ENCODE measurements at regions of chr3 and their contacts with region 1.

Region 1: GRCh38 chr3:196942226-196942914 is at the start of gene NCBP2:
- DNase-seq: peak; percentile 92 to 97 (median 96)
- H3K4me3 ChIP-seq: peak within 1 kb of the TSS; percentile 69 to 100 (median 98)
- H3K27ac ChIP-seq: peak within 1 kb of the TSS; percentile 4 to 98 (median 89)
- H3K27me3 ChIP-seq: no peaks in the 10 kb centered on the region
- CTCF ChIP-seq: peak; percentile 16 to 84 (median 66)
- total RNA-seq, gene NCBP2: 29.7 to 67.3 (median 53.4) TPM

Region 2: DNA sequence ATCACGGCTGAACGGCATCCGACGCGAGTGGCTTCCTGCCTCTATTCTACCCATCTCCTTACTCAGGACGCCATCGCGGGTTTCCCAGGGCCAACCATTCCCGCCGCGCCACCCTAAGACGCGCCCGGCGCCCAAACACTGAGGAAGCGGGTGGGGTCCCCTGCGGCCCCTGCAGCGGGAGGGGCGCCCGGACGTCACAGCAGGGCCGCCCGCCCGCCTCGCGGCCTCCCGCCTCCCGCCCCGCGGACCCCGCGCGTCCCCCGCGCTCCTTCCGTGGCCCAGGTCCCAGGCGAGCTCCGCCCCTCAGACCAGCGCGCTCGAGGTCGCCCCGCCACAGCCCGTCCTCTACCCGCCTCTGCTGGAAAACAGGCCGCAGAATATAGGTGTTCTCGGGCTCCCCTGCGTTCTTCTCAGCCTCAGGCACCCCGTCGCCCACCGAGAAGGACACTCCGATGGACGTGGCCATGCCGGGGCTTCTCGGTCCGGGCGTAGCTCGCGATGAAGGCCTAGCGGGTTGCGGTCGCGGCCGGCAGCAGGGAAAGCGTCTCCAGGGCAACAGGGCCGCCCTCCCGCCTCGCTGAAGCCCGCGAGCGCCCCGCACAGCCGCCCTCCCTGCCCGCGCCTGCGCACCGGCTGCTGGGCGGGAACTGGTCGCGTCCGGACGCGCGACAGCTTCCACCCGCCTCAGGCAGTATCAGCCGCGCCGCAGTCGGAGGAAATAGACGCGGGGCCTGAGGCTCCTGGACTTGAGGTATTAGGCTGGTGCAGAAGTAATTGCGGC is 624.5 kb before region 1 on chr3 and contains the start of gene DYNLT2B:
- intact Hi-C with region 1: loop called in 1 of 2 experiments (anchors 10 kb)
- DNase-seq: peak; percentile 74 to 93 (median 85)
- H3K4me3 ChIP-seq: peak within 1 kb of the TSS; percentile 65 to 94 (median 86)
- H3K27ac ChIP-seq: peak within 1 kb of the TSS; percentile 20 to 96 (median 88)
- H3K27me3 ChIP-seq: no peaks in the 10 kb centered on the region
- CTCF ChIP-seq: peak in 35 of 56 donors; percentile 9 to 52 (median 24)
- total RNA-seq, gene DYNLT2B: 11.4 to 43.8 (median 25.6) TPM

Region 3: DNA sequence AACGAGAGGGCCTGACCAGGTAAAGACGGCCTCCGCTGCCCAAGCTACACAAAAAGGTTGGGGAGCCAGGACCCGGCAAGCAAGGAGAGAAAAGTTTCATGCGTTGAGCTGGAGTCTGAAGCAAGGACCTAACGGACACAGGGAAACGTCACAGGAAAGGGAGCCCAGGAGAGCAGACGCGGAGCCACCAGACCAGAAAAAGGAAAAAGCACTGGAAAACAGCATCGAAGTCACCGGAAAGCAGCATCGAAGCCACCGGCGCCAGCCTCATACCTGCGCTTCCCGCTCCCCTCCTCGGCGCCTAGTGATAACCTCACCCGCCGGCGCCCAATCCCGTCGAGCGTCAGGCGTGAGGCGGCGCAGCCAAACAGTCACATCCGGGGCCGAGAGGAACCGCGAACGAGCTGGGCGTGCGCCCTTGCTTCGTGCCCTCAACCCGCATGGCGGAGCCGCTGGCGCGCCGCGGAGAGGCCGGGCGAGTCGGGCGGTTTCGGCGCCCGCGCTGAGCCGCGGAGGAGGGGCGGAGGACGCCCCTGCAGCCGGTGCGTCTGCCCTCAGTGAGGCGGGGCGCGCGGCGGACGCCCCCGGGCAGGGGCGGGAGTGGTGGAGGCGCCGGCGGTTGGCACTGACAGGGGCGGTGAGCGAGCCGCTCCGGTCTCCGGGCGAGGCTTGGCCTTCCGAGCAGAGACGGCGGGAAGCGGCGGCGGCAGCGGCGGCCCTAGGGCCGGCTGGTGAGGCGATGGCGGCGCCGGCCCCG is 373.9 kb before region 1 on chr3 and contains the starts of genes FBXO45 and WDR53:
- intact Hi-C with region 1: loop called (anchors 2 to 5 kb)
- DNase-seq: peak; percentile 85 to 96 (median 93)
- H3K4me3 ChIP-seq: peak within 1 kb of the TSS; percentile 63 to 100 (median 94)
- H3K27ac ChIP-seq: peak within 1 kb of the TSS in 56 of 59 donors; percentile 10 to 91 (median 77)
- H3K27me3 ChIP-seq: no peaks in the 10 kb centered on the region
- CTCF ChIP-seq: peak in 43 of 56 donors; percentile 7 to 65 (median 38)
- total RNA-seq, gene FBXO45: 12.3 to 28.8 (median 20.8) TPM
- total RNA-seq, gene WDR53: 6.0 to 19.1 (median 12.3) TPM

Region 4: GRCh38 chr3:196711838-196712513 is 230.4 kb before region 1 on chr3 and contains the starts of genes CEP19 and PIGX:
- intact Hi-C with region 1: loop called (anchors 5 to 10 kb)
- DNase-seq: peak; percentile 78 to 95 (median 86)
- H3K4me3 ChIP-seq: peak within 1 kb of the TSS; percentile 61 to 98 (median 90)
- H3K27ac ChIP-seq: peak within 1 kb of the TSS; percentile 39 to 97 (median 90)
- H3K27me3 ChIP-seq: no peaks in the 10 kb centered on the region
- CTCF ChIP-seq: peak in 40 of 56 donors; percentile 8 to 65 (median 32)
- total RNA-seq, gene CEP19: 2.8 to 14.6 (median 8.6) TPM
- total RNA-seq, gene PIGX: 23.5 to 51.0 (median 37.0) TPM

Region 5: GRCh38 chr3:196739671-196740480 is 202.5 kb before region 1 on chr3 and contains the start of gene PAK2:
- intact Hi-C with region 1: loop called in 1 of 2 experiments (anchors 1 kb)
- DNase-seq: peak; percentile 91 to 95 (median 94)
- H3K4me3 ChIP-seq: peak within 1 kb of the TSS; percentile 47 to 99 (median 92)
- H3K27ac ChIP-seq: peak within 1 kb of the TSS; percentile 63 to 98 (median 96)
- H3K27me3 ChIP-seq: no peaks in the 10 kb centered on the region
- CTCF ChIP-seq: peak in 55 of 56 donors; percentile 22 to 79 (median 59)
- total RNA-seq, gene PAK2: 28.1 to 67.1 (median 44.9) TPM

Region 6: GRCh38 chr3:196867507-196868296 is 74.7 kb before region 1 on chr3 and contains the start of gene SENP5:
- intact Hi-C with region 1: loop called (anchors 1 to 2 kb)
- DNase-seq: peak; percentile 81 to 96 (median 90)
- H3K4me3 ChIP-seq: peak within 1 kb of the TSS; percentile 63 to 100 (median 97)
- H3K27ac ChIP-seq: peak within 1 kb of the TSS in 58 of 59 donors; percentile 48 to 97 (median 91)
- H3K27me3 ChIP-seq: no peaks in the 10 kb centered on the region
- CTCF ChIP-seq: peak in 29 of 56 donors; percentile 3 to 59 (median 27)
- total RNA-seq, gene SENP5: 43.6 to 79.0 (median 59.0) TPM

Region 7: DNA sequence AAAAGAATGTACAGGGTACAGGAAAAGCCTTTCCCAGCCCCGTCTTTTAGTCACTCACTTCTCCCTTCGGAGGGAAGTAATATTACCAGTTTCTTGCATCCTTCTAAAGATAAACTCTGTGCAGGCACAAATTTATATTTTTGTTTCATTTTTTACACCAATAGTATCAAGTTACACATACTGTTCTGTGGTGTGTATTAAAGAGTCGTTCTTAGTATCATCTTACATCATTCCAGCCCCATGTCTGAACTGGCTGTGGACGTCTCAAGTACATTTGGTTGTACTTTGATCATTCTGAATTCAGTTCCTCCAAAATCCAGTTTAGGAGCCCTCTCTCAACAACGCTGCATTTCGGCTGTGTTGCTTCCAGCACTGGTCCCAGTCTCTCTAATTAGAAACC is 1086.3 kb after region 1 on chr3:
- intact Hi-C with region 1: no loop called
- DNase-seq: no peak
- H3K4me3 ChIP-seq: no peak overlapping the region
- H3K27ac ChIP-seq: no peak overlapping the region
- H3K27me3 ChIP-seq: no peaks in the 10 kb centered on the region
- CTCF ChIP-seq: no peak

Measured in dorsolateral prefrontal cortex (tissue), 120 donors.